ENCODE measurements at regions of chr4 and their contacts with region 1.

Region 1: DNA sequence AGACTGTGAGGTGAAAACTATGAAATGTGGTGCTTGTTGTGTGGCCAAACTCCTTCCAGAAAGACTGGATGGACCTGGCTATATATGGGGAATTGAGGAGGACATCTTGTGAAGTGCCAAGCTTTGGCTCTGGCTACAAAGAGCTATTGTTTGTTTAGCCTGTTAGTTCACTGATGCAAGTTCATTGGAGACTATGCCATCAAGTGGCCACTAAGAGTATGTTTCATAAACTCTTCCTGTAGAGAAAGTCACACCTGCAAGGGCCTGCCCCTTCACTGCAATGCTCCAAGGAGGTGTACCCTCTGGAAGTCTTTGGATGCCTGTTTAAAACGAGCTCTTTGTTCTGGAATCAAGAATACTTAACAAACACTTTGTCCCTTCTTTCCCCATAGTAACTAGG is 382.0 kb downstream of the GABRG1 start:
- DNase-seq: peak in 1 of 3 donors; percentile 13
- ATAC-seq: peak; percentile 89
- H3K4me3 ChIP-seq: no peak overlapping the region
- H3K4me1 ChIP-seq: peaks cover 8% of the 10 kb centered on the region
- CTCF ChIP-seq: no peak

Region 2: GRCh38 chr4:45550766-45551366 is 191.0 kb before region 1 on chr4:
- intact Hi-C with region 1: loop called in 1 of 2 experiments (anchors 5 kb)
- DNase-seq: no peak
- ATAC-seq: no peak
- H3K4me3 ChIP-seq: no peak overlapping the region
- H3K4me1 ChIP-seq: no peaks in the 10 kb centered on the region
- CTCF ChIP-seq: no peak

Region 3: DNA sequence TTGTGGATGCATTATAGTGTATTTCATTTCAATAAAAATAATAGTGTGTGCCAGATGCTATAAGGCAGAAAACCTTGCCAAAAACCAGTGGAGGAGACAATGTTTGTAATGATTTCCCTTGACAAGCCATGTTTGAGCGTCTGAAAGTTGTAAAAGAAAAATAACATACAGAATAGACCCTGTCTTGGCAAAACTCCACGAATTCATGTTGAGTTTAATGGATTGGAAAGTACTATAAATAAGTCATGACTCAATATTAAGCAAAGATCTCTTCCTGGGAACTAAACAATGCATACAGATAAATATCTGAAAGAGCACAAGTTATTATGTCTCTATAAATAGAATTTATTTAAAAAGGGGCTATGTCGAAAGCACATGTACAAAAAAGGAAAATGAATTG is 161.6 kb before region 1 on chr4:
- intact Hi-C with region 1: no loop called
- DNase-seq: no peak
- ATAC-seq: no peak
- H3K4me3 ChIP-seq: no peak overlapping the region
- H3K4me1 ChIP-seq: no peaks in the 10 kb centered on the region
- CTCF ChIP-seq: no peak

Region 4: DNA sequence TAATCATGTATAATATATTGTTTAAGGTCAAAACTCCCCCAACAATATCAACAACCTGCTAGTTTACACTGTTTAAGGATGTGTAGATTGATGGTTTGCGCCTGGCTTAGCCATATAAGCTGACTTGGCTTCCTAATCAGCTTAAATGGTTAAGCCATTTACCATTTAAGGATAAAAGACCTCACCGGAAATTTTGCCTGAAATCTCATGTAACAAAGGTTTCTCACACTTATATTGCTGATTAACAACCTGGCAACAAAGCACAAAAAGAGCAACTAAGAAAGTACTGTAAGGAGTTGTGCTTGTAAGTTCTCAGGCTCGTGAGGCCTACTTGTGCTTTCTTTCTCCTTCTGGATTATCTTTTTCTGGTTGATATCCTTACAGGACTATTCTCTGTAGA is 103.3 kb before region 1 on chr4:
- intact Hi-C with region 1: no loop called
- DNase-seq: no peak
- ATAC-seq: peak; percentile 47
- H3K4me3 ChIP-seq: no peak overlapping the region
- H3K4me1 ChIP-seq: peaks cover 4% of the 10 kb centered on the region
- CTCF ChIP-seq: no peak

Region 5: GRCh38 chr4:45865781-45866180 is 123.9 kb after region 1 on chr4:
- intact Hi-C with region 1: no loop called
- DNase-seq: no peak
- ATAC-seq: no peak
- H3K4me3 ChIP-seq: no peak overlapping the region
- H3K4me1 ChIP-seq: no peaks in the 10 kb centered on the region
- CTCF ChIP-seq: no peak